Transverse colon (tissue), 4 donors: ENCODE measurements at regions of chr15 and their contacts with region 1.

Region 1: GRCh38 chr15:75738647-75739331 is 26.1 kb upstream of the CSPG4 start:
- DNase-seq: peak; percentile 97
- H3K4me3 ChIP-seq: peak overlapping the region; percentile 63 to 96 (median 64)
- H3K27ac ChIP-seq: peak overlapping the region; percentile 66 to 84 (median 77)
- H3K4me1 ChIP-seq: peaks cover 0 to 12% (median 8%) of the 10 kb centered on the region in 4 donors
- H3K27me3 ChIP-seq: no peaks in the 10 kb centered on the region
- CTCF ChIP-seq: no peak
- EP300 ChIP-seq: no peak
- POLR2A ChIP-seq: no peak

Region 2: GRCh38 chr15:75661091-75661777 is 77.6 kb before region 1 on chr15:
- in situ Hi-C with region 1: no loop called
- intact Hi-C with region 1: no loop called
- DNase-seq: peak; percentile 83
- H3K4me3 ChIP-seq: no peak overlapping the region
- H3K27ac ChIP-seq: peak overlapping the region; percentile 71 to 87 (median 81)
- H3K4me1 ChIP-seq: peaks cover 16 to 66% (median 43%) of the 10 kb centered on the region in 4 donors
- H3K27me3 ChIP-seq: no peaks in the 10 kb centered on the region
- CTCF ChIP-seq: no peak
- EP300 ChIP-seq: no peak
- POLR2A ChIP-seq: no peak

Region 3: DNA sequence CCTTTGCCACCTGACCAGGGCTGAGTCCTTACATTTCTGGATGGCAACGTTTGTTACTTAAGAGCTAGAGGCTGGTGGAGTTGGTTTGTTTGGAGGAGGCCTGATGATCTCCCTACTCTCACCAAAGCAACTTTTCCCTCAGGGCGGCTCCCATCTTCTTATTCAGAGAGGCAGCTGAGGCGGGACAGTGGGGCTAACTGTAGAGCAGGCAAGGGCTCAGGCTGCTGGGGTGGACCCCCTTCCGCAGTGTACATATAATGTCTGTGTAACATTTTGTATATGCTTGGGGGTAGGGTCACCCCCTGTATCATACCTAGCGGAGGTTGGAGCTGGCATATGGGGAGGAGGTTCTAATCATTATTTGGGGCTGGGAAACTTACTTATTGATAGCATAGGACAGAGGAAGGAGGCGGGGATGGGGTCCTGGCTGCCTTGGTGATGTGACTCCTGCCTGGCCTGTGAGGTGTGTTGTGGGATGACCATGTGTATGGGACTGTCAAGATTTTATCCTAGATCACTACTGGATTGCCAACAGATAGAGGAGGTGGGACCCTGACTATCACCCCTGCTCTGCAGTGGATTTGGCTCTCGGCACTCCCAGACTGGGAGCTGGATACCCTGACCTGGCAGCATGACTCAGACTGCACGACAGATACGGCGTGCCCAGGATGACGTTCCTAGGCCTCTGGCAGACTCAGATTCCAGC is 52.0 kb after region 1 on chr15:
- in situ Hi-C with region 1: loop called in 1 of 4 experiments (anchors 10 kb)
- intact Hi-C with region 1: no loop called
- DNase-seq: no peak
- H3K4me3 ChIP-seq: no peak overlapping the region
- H3K27ac ChIP-seq: no peak overlapping the region
- H3K4me1 ChIP-seq: no peaks in the 10 kb centered on the region
- H3K27me3 ChIP-seq: peaks cover 21% of the 10 kb centered on the region
- CTCF ChIP-seq: no peak
- EP300 ChIP-seq: no peak
- POLR2A ChIP-seq: no peak